Activated CD4-positive, alpha-beta T cell treated with anti-CD3 and anti-CD28 coated beads, Interleukin-2, amount 10 ng/mL, durations not matched to agents 24 days and 14 days (primary cell): ENCODE measurements at regions of chrX and their contacts with region 1.

Region 1: DNA sequence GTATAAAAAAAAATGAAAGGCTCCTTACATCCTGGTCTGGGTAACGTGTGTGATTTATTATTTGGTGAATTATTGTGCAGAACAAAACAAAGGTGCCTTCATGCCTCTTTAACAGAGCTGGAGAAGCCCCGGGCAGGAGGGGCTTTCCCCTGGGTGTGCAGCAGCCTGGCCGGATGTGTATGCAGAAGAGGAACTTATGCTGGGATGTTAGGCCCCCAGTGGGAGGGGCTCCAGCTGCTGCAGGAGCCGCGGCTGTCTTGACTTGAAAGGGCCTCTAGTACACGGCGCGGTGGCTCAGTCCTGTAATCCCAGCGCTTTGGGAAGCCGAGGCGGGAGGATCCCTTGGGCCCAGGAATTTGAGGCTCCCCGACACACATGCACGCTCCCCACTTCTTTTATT is 16.0 kb downstream of the CCNQ start:
- DNase-seq: peak; percentile 90
- H3K4me3 Mint-ChIP-seq: peak overlapping the region; percentile 57
- H3K27ac Mint-ChIP-seq: no peak overlapping the region
- H3K4me1 Mint-ChIP-seq: peaks cover 10% of the 10 kb centered on the region
- H3K27me3 Mint-ChIP-seq: no peaks in the 10 kb centered on the region

Region 2: DNA sequence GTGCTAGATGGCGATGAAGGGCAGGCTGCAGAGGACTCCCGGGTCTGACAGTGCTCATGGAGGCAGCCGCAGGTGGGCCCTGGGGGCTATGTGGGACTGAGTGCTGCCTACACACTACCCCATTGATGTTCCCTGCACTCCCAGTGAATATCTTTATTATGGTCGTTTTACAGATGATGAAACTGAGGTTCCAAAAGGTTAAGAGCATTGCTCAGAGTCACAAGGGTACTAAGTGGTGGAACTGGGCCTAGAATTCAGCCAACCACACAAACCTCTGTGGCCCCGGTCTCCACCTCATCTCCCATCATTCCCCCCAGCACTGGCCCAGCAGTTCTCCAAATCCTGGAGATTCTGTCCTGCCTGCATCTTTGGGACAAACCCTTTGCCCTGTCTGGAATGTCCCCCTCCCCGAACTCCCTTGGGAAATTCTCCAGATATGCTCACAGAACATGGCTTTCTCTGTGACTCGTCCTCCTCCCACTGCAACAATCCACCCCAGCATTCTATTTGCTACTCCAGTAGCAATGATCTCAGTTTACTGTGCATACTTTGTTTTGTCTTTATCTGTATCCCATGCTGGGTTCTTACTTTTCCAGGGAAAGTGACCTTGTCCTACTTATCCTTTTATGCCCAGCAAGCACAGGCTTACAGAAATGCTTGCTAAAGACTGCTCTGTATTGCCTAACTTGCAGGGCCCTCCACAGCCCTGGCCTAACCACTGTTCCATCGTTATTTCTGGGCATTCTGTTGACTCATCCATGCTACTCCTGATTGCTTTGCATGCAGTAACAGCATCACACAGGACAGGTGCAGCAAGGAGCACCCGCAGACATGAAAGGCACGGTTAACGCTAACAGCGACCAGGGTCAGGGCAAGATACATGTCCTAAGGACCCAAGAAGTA is 275.4 kb before region 1 on chrX:
- intact Hi-C with region 1: no loop called
- DNase-seq: no peak
- H3K4me3 Mint-ChIP-seq: no peak overlapping the region
- H3K27ac Mint-ChIP-seq: no peak overlapping the region
- H3K4me1 Mint-ChIP-seq: peaks cover 3% of the 10 kb centered on the region
- H3K27me3 Mint-ChIP-seq: peaks cover 24% of the 10 kb centered on the region

Region 3: GRCh38 chrX:153599192-153600031 is 16.5 kb after region 1 on chrX:
- intact Hi-C with region 1: loop called (anchors 2 kb)
- DNase-seq: peak; percentile 97
- H3K4me3 Mint-ChIP-seq: peak overlapping the region; percentile 87
- H3K27ac Mint-ChIP-seq: peak overlapping the region; percentile 73
- H3K4me1 Mint-ChIP-seq: peaks cover 25% of the 10 kb centered on the region
- H3K27me3 Mint-ChIP-seq: no peaks in the 10 kb centered on the region